A549 (cell line): ENCODE measurements at regions of chr10 and their contacts with region 1.

Region 1: GRCh38 chr10:11270135-11270857 is 252.6 kb downstream of the CELF2 start:
- DNase-seq: peak; percentile 56 to 65
- ATAC-seq: peak; percentile 96 to 100
- H3K4me3 ChIP-seq: no peak overlapping the region
- H3K27ac ChIP-seq: no peak overlapping the region
- H3K4me1 ChIP-seq: no peaks in the 10 kb centered on the region
- CTCF ChIP-seq: peak; percentile 76
- EP300 ChIP-seq: no peak
- POLR2A ChIP-seq: no peak
- RAD21 ChIP-seq: peak; percentile 80

Region 2: DNA sequence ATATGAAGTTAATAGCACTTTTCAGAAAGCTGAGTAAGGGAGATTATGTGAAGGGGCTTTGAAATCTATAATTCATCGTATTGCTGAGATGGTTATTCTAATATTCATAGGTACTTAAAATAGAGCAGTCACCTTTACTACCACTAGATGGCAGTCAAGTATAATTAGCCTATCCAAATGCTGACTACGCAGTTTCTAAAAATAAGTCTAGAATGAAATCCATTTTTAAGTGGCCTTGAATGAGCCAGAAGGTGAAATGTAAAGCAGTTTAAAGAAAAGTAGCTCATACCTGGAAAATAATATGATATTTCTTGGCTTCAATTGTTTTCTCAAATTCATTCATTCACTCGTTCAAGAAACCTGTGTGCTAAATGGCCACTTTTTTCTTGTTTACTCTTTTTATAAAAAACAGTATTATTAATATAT is 1938.7 kb before region 1 on chr10:
- CTCF ChIA-PET with region 1: interaction called, 12 read pairs
- POLR2A ChIA-PET with region 1: no interaction called
- DNase-seq: peak; percentile 48 to 54
- ATAC-seq: peak in 1 of 2 experiments; percentile 72; a peak in 3 of 6 replicates
- H3K4me3 ChIP-seq: no peak overlapping the region
- H3K27ac ChIP-seq: no peak overlapping the region
- H3K4me1 ChIP-seq: no peaks in the 10 kb centered on the region
- CTCF ChIP-seq: peak; percentile 74
- EP300 ChIP-seq: no peak
- POLR2A ChIP-seq: no peak
- RAD21 ChIP-seq: peak; percentile 78

Region 3: DNA sequence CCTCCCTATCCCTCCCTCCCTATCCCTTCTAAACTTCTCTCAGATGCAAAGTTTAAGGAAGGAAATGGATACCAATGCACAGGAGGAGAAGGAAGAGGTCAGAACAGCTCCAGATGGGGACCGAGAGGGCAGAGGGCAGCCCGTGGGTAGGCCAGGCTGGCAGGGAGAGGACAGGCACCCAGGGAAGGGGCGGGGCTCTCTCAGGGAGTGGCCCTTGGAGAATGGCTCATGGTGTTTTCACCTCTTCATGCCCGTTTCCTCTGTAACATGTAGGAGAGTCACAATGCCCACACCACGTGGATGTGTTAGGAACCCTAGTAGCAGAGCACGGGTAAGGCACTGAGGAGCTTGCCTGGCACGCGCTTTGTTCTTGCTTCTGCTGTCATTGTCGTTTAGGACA is 11.9 kb after region 1 on chr10:
- CTCF ChIA-PET with region 1: interaction called, 11 read pairs
- POLR2A ChIA-PET with region 1: no interaction called
- DNase-seq: no peak
- ATAC-seq: no peak
- H3K4me3 ChIP-seq: no peak overlapping the region
- H3K27ac ChIP-seq: no peak overlapping the region
- H3K4me1 ChIP-seq: no peaks in the 10 kb centered on the region
- CTCF ChIP-seq: no peak
- EP300 ChIP-seq: no peak
- POLR2A ChIP-seq: no peak
- RAD21 ChIP-seq: no peak